Psoas muscle (tissue), 8 donors: ENCODE measurements at regions of chr17 and their contacts with region 1.

Region 1: GRCh38 chr17:51585514-51586104 is 325.3 kb downstream of the UTP18 start:
- DNase-seq: no peak
- ATAC-seq: peak in 2 of 4 donors; percentile 69 to 73
- H3K4me3 ChIP-seq: no peak overlapping the region
- H3K27ac ChIP-seq: no peak overlapping the region
- H3K4me1 ChIP-seq: no peaks in the 10 kb centered on the region
- H3K27me3 ChIP-seq: no peaks in the 10 kb centered on the region
- CTCF ChIP-seq: peak; percentile 54

Region 2: DNA sequence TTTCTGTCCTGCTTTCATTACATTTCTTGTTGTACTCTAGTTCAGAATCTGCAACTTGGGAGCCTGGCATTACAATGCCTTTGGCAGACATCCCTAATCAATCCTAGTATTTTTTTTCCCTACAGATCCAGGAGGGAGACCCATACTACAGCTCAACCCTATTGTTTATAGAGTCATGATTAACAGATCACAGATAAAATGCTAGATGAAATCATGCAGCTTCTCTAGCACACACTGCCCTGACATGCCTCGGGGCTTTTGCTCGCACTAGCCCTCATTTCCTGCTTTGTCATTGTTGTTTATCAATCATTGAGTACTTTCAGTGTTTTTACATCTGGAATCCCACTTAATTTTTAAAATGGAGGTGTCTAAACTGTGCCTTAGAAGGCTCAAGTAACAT is 160.4 kb after region 1 on chr17:
- intact Hi-C with region 1: loop called in 1 of 2 experiments (anchors 10 kb)
- DNase-seq: no peak
- ATAC-seq: no peak
- H3K4me3 ChIP-seq: no peak overlapping the region
- H3K27ac ChIP-seq: no peak overlapping the region
- H3K4me1 ChIP-seq: no peaks in the 10 kb centered on the region
- H3K27me3 ChIP-seq: no peaks in the 10 kb centered on the region
- CTCF ChIP-seq: no peak

Region 3: DNA sequence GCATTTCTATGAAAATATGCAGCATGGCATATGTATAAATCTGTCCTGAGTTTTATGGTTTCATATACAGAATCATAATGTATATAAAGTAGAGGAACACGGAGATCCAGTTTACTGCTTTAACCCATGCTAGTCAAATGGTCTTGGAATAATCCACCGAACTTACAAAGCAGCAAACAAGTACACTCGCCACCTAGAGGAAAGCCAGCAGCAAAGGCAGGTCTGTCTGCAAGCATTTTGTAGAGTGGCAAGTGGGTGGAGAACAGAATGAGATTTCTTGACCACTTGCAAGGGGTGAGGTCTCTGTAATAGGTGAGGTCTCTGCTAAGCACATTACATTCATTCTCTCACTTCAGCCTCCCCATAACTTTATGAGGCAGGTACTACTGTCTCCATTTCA is 264.6 kb after region 1 on chr17:
- intact Hi-C with region 1: no loop called
- DNase-seq: no peak
- ATAC-seq: no peak
- H3K4me3 ChIP-seq: no peak overlapping the region
- H3K27ac ChIP-seq: no peak overlapping the region
- H3K4me1 ChIP-seq: no peaks in the 10 kb centered on the region
- H3K27me3 ChIP-seq: peaks cover 0 to 3% (median 0%) of the 10 kb centered on the region in 3 donors
- CTCF ChIP-seq: no peak